Caco-2 (cell line): ENCODE measurements at regions of chr10 and their contacts with region 1.

Region 1: DNA sequence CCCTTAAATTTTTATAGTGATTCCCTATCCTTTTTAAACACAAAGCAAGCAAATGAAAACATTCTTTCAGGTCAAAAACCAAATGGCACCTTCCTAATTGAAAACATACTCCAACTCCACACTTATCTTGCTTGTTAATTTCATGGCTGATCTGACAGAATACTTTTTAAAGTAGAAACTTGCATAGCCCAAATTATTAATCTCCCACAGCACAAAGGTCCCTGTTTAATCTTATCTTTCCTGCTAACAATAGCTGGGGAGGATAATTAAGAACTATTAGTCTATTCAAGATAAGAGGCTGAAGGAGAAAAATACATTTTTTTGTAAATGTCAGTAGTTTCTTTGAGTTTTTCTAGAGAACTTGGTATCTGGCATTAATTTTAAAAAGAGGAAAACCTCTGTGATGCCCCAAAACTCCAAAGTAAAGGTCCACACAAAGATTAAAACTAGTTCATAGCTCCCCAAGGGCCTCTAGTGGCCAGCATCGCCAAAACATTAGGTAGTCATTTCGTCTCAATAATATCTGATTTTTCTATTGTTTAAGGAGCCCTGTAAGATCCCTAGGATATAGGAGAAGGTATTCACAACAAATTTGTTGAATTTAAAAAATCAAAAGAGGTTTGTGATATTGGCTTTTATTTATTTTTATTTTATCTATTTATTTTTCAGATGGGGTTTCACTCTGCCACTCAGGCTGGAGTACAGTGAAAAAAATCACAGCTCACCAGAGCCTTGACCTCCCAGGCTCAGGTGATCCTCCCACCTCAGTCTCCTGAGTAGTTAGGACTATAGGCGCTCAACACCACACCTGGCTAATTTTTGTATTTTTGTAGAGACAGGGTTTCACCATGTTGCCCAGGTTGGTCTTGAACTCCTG is 14.7 kb downstream of the CDNF start:
- DNase-seq: peak in 1 of 2 experiments; percentile 64
- H3K4me3 ChIP-seq: no peak overlapping the region
- H3K4me3 Mint-ChIP-seq: peak overlapping the region; percentile 18
- H3K27ac Mint-ChIP-seq: peak overlapping the region; percentile 71
- H3K4me1 ChIP-seq: peaks cover 32% of the 10 kb centered on the region
- H3K4me1 Mint-ChIP-seq: peaks cover 35% of the 10 kb centered on the region
- H3K27me3 ChIP-seq: no peaks in the 10 kb centered on the region
- H3K27me3 Mint-ChIP-seq: peaks cover 6% of the 10 kb centered on the region
- CTCF ChIP-seq: peak; percentile 76 to 87

Region 2: GRCh38 chr10:14536241-14537213 is 286.6 kb before region 1 on chr10:
- CTCF ChIA-PET with region 1: no interaction called
- POLR2A ChIA-PET with region 1: no interaction called
- intact Hi-C with region 1: loop called (anchors 1 kb)
- DNase-seq: peak; percentile 84 to 87
- H3K4me3 ChIP-seq: no peak overlapping the region
- H3K4me3 Mint-ChIP-seq: no peak overlapping the region
- H3K27ac Mint-ChIP-seq: no peak overlapping the region
- H3K4me1 ChIP-seq: peaks cover 55% of the 10 kb centered on the region
- H3K4me1 Mint-ChIP-seq: peaks cover 38% of the 10 kb centered on the region
- H3K27me3 ChIP-seq: no peaks in the 10 kb centered on the region
- H3K27me3 Mint-ChIP-seq: no peaks in the 10 kb centered on the region
- CTCF ChIP-seq: peak; percentile 70 to 73

Region 3: DNA sequence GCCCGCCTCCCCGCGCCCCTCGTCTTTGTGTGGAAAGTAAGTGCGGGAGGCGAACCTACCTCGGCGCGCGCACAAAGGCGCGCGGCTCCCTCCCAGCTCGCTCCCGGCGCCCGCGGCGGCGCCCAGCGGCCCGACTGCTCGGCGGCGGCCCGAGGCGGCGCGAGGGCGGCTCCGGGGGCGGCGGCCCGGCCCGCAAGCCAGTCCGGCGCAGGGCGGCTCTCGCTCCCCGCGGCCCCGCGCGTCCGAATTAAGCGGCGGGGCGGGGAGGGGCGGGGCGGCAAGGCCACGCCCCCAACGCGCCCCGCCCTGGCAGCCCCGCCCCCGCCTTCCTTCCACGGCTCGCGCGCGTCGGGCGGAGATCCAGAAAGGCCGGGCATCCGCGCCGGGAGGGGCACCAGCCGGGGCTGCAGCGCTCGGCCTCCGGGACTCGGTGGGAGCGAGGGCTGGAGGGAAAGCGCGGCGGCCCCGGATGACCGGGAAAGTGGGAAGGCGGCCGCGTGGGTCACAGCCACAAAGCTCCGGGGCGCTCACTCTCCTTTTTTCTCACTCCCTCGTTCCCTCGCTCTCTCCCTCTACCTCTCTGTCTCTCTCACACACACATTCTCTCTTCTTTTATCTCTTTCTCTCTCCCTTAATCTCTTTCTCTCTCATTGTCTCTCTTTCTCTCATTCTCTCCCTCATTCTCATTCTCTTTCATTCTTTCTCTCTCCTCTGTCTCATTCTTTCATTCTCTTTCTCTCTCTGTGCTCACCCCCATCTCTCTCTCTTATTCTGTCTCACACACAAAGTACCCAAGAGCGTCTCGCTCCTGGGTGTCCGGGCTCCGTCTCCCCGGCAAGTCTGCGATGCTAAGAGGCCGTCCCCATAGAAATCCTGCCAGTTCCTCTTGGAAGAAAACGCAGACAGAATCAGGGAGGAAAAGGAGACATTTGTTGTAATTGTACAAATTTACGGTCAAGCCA is 218.7 kb before region 1 on chr10:
- CTCF ChIA-PET with region 1: no interaction called
- POLR2A ChIA-PET with region 1: interaction called, 3 read pairs
- intact Hi-C with region 1: loop called (anchors 5 kb)
- DNase-seq: peak; percentile 79 to 89
- H3K4me3 ChIP-seq: peak overlapping the region; percentile 49
- H3K4me3 Mint-ChIP-seq: peak overlapping the region; percentile 80
- H3K27ac Mint-ChIP-seq: peak overlapping the region; percentile 43
- H3K4me1 ChIP-seq: peaks cover 51% of the 10 kb centered on the region
- H3K4me1 Mint-ChIP-seq: peaks cover 40% of the 10 kb centered on the region
- H3K27me3 ChIP-seq: no peaks in the 10 kb centered on the region
- H3K27me3 Mint-ChIP-seq: no peaks in the 10 kb centered on the region
- CTCF ChIP-seq: no peak

Region 4: GRCh38 chr10:14688606-14689005 is 134.5 kb before region 1 on chr10:
- CTCF ChIA-PET with region 1: no interaction called
- POLR2A ChIA-PET with region 1: no interaction called
- intact Hi-C with region 1: loop called (anchors 5 kb)
- DNase-seq: no peak
- H3K4me3 ChIP-seq: no peak overlapping the region
- H3K4me3 Mint-ChIP-seq: no peak overlapping the region
- H3K27ac Mint-ChIP-seq: peak overlapping the region; percentile 17
- H3K4me1 ChIP-seq: peaks cover 33% of the 10 kb centered on the region
- H3K4me1 Mint-ChIP-seq: peaks cover 33% of the 10 kb centered on the region
- H3K27me3 ChIP-seq: no peaks in the 10 kb centered on the region
- H3K27me3 Mint-ChIP-seq: no peaks in the 10 kb centered on the region
- CTCF ChIP-seq: no peak

Region 5: GRCh38 chr10:14782691-14783363 is 40.3 kb before region 1 on chr10:
- CTCF ChIA-PET with region 1: interaction called, 3 read pairs
- POLR2A ChIA-PET with region 1: no interaction called
- intact Hi-C with region 1: loop called (anchors 2 kb)
- DNase-seq: peak; percentile 91 to 96
- H3K4me3 ChIP-seq: no peak overlapping the region
- H3K4me3 Mint-ChIP-seq: peak overlapping the region; percentile 49
- H3K27ac Mint-ChIP-seq: peak overlapping the region; percentile 90
- H3K4me1 ChIP-seq: peaks cover 37% of the 10 kb centered on the region
- H3K4me1 Mint-ChIP-seq: peaks cover 35% of the 10 kb centered on the region
- H3K27me3 ChIP-seq: no peaks in the 10 kb centered on the region
- H3K27me3 Mint-ChIP-seq: no peaks in the 10 kb centered on the region
- CTCF ChIP-seq: no peak

Region 6: GRCh38 chr10:15035385-15036301 is 212.5 kb after region 1 on chr10:
- CTCF ChIA-PET with region 1: no interaction called
- POLR2A ChIA-PET with region 1: no interaction called
- intact Hi-C with region 1: no loop called
- DNase-seq: no peak
- H3K4me3 ChIP-seq: no peak overlapping the region
- H3K4me3 Mint-ChIP-seq: no peak overlapping the region
- H3K27ac Mint-ChIP-seq: no peak overlapping the region
- H3K4me1 ChIP-seq: peaks cover 6% of the 10 kb centered on the region; the same call in 1 of the 2 replicates
- H3K4me1 Mint-ChIP-seq: no peaks in the 10 kb centered on the region
- H3K27me3 ChIP-seq: no peaks in the 10 kb centered on the region
- H3K27me3 Mint-ChIP-seq: no peaks in the 10 kb centered on the region
- CTCF ChIP-seq: no peak